Tibial artery (tissue), 4 donors: ENCODE measurements at regions of chr10 and their contacts with region 1.

Region 1: GRCh38 chr10:32445740-32446535 is at the start of gene CCDC7:
- DNase-seq: peak; percentile 77 to 92
- H3K4me3 ChIP-seq: peak within 1 kb of the TSS; percentile 68 to 93
- H3K27ac ChIP-seq: peak within 1 kb of the TSS; percentile 97
- H3K4me1 ChIP-seq: peaks cover 0 to 13% (median 0%) of the 10 kb centered on the region in 4 donors
- H3K27me3 ChIP-seq: no peaks in the 10 kb centered on the region
- CTCF ChIP-seq: peak; percentile 36 to 51

Region 2: DNA sequence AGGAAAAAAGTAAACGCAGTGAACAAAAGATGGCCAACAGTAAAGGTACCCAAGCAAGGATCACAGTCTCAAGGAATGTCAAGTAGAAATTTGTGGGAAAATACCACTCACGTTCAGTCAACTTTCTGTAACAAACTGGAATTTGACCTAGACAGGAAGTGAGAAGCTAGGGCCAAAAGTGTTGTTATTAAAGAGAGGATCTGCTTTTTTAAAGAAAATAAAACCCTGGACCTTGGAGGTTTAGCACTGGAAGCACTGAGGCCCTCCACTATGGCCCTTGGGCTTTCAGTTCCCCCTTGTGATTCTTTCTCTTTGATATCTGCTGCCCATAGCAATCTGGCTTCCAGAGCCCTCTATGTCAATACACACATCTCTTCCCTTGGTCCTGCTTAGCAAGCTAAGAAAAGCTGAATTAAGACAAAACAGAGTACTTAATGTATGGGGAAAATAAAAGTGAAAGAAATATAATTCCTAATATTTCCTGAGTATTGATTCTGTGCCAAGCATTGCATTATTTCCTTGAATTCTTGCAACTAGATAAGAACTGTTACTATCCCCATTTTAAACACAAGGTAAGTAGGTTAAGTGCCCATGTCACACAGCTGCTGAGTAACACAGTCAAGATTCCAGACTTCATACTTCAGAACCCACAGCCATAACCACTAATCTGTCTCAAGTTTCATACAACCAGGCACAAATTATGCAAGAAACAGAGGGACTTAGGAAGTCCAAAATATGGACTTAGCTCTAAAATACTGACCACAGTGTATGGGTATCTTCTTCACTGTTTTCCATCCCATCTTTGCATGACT is 1411.6 kb before region 1 on chr10:
- intact Hi-C with region 1: no loop called
- DNase-seq: no peak
- H3K4me3 ChIP-seq: no peak overlapping the region
- H3K27ac ChIP-seq: peak overlapping the region; percentile 61 to 100
- H3K4me1 ChIP-seq: peaks cover 7 to 38% (median 20%) of the 10 kb centered on the region in 4 donors
- H3K27me3 ChIP-seq: no peaks in the 10 kb centered on the region
- CTCF ChIP-seq: no peak

Region 3: DNA sequence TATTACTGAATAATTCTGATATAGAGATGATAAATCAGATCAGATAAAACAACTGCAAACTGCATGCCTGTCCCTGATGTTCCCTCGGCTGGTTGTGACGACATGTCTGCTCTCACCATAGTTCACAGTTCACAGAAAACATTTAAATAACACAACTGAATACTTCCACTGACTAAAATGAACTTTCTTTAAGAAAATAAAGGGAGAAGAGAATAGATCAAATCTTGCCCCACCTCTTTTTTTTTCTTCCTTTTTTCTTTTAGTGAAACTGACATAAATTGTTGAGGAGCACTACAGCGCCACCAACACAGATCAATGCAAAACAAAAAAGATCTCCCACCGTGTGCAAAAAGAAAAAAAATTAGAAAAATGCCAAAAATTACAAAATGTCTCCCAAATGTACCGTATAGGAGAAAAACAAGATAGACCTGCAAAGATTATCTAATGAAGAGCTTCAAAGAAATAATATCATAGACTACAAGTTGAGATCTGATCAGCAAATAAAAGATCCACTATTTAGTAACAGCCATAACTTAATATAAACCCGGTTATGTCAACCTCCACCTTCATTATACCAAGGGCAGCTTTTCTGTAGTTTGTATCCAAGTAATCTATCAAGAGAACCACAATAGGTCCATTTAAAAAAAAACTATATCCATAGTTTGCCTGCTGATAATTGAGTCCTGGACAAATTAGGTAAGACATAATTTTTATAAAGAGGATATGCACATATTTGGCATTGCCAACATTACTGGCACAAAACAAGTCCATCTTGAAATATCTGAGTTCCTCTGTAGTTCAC is 68.3 kb before region 1 on chr10:
- intact Hi-C with region 1: loop called (anchors 5 kb)
- DNase-seq: no peak
- H3K4me3 ChIP-seq: peak overlapping the region; percentile 65 to 82
- H3K27ac ChIP-seq: peak overlapping the region; percentile 79 to 84
- H3K4me1 ChIP-seq: peaks cover 0 to 43% (median 6%) of the 10 kb centered on the region in 4 donors
- H3K27me3 ChIP-seq: no peaks in the 10 kb centered on the region
- CTCF ChIP-seq: peak in 1 of 2 experiments; percentile 15